SK-N-SH (cell line): ENCODE measurements at regions of chr15 and their contacts with region 1.

Region 1: DNA sequence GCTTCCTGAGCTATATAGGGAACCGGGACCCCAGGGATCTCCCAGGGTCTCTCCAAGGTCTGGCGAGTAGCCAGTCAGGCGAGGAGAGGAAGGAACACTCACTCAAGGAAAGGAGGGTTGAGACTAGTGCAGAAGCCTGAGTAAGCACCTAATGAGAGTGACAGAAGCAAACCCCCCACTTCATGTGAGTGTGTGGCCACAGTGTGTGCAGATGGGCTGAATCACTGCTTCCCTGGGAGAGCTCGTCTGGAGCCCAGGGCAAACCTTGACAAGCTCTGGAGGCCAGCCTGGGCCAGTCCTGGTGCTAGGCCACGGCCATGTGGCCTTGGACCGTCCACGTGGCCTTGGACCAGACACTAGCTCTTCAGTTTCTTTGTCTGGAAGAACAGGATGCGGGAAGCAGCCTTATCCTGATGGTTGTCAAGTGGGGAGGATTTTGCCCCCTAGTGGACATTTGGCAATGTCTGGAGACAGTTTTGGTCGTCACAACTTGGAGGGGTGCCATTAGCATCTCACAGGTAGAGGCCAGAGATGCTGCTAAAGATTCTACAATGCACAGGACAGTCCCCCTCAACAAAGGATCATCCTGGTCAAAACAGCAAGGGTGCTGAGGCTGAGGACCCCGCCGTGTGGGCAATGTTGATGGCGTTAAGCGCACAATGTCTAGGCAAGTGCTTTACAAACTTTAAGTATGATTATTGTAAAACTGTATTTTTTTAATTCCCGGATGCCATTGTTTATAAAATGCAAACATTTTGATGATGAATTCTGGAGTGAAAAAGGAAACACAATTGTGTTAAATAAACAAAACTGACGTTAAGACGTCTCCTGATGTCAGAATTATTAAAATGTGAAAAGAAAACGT is 34.8 kb upstream of the CTSH start:
- DNase-seq: peak; percentile 83
- H3K4me3 ChIP-seq: no peak overlapping the region; a peak in 1 of 4 replicates
- H3K27ac ChIP-seq: peak overlapping the region in 1 of 2 experiments; percentile 40; a peak in 1 of 4 replicates
- H3K4me1 ChIP-seq: peaks cover 0 to 6% of the 10 kb centered on the region in 2 experiments; a peak in 1 of 4 replicates
- H3K27me3 ChIP-seq: no peaks in the 10 kb centered on the region
- CTCF ChIP-seq: peak; percentile 75
- EP300 ChIP-seq: no peak
- RAD21 ChIP-seq: peak; percentile 72

Region 2: DNA sequence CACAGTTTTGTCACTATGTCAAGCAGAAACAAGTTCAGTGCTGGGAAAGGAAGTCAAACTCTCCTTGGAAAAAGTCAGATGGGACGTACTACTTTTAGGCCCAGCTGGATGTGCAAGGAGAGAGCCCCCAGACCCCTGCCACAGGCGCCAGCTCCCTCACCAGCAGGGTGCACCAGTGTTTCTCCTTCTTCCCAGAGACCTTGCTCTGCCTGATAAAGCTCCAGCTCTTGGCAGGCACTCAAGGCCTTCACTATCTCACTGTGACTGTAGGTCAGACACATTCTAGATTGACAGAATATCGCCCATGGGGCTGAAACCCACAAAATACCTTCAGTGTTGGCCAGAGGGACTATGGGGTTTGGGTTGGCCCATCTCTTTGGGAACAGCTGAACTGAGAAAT is 283.8 kb before region 1 on chr15:
- CTCF ChIA-PET with region 1: no interaction called
- POLR2A ChIA-PET with region 1: no interaction called
- DNase-seq: no peak
- H3K4me3 ChIP-seq: no peak overlapping the region
- H3K27ac ChIP-seq: peak overlapping the region in 1 of 2 experiments; percentile 56; a peak in 2 of 4 replicates
- H3K4me1 ChIP-seq: peaks cover 0 to 31% of the 10 kb centered on the region in 2 experiments; a peak in 1 of 4 replicates
- H3K27me3 ChIP-seq: peaks cover 5% of the 10 kb centered on the region; the same call in 1 of the 2 replicates
- CTCF ChIP-seq: no peak
- EP300 ChIP-seq: no peak
- RAD21 ChIP-seq: no peak

Region 3: GRCh38 chr15:78822514-78822913 is 157.2 kb before region 1 on chr15:
- CTCF ChIA-PET with region 1: no interaction called
- POLR2A ChIA-PET with region 1: no interaction called
- DNase-seq: no peak
- H3K4me3 ChIP-seq: no peak overlapping the region
- H3K27ac ChIP-seq: no peak overlapping the region
- H3K4me1 ChIP-seq: peaks cover 0 to 3% of the 10 kb centered on the region in 2 experiments; a peak in 1 of 4 replicates
- H3K27me3 ChIP-seq: no peaks in the 10 kb centered on the region
- CTCF ChIP-seq: no peak
- EP300 ChIP-seq: no peak
- RAD21 ChIP-seq: no peak

Region 4: GRCh38 chr15:78938658-78939488 is 40.8 kb before region 1 on chr15:
- CTCF ChIA-PET with region 1: no interaction called
- POLR2A ChIA-PET with region 1: no interaction called
- DNase-seq: no peak
- H3K4me3 ChIP-seq: no peak overlapping the region
- H3K27ac ChIP-seq: no peak overlapping the region
- H3K4me1 ChIP-seq: peaks cover 0 to 4% of the 10 kb centered on the region in 2 experiments; a peak in 1 of 4 replicates
- H3K27me3 ChIP-seq: no peaks in the 10 kb centered on the region
- CTCF ChIP-seq: no peak
- EP300 ChIP-seq: no peak
- RAD21 ChIP-seq: no peak

Region 5: DNA sequence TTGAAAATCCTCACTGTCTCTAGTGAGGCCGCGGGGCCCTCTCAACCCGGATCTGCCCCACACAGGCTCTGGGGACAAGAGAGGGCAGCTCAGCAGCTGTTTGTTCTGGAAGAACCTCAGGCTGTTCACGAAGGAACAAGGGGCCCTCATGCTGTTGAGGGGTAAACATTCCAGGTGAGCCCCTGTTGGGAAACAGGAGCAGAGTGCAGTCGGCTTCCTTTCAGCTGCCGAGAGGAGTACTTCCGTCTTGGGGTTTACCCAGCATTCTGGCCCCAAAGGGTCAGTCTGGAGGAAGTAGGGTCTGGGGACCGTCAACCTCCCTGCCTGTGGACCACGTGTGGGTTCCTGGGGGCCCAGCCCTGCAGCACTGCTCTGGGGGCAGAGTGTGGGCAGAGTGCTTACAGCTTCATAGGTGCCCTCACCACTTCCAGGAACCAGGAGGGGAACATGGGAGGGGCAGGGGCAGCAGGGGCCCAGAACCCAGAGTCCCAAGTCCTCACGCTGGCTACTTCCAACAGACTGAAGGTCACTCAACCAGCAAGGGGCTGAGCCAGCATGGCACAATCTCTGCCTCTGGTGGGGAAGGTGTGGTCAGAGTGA is 14.3 kb after region 1 on chr15:
- CTCF ChIA-PET with region 1: interaction called, 10 read pairs
- POLR2A ChIA-PET with region 1: no interaction called
- DNase-seq: no peak
- H3K4me3 ChIP-seq: no peak overlapping the region
- H3K27ac ChIP-seq: no peak overlapping the region
- H3K4me1 ChIP-seq: peaks cover 2 to 24% of the 10 kb centered on the region in 2 experiments; a peak in 3 of 4 replicates
- H3K27me3 ChIP-seq: no peaks in the 10 kb centered on the region
- CTCF ChIP-seq: no peak
- EP300 ChIP-seq: no peak
- RAD21 ChIP-seq: no peak